Activated CD8-positive, alpha-beta memory T cell treated with anti-CD3 and anti-CD28 coated beads, Interleukin-2, amount 10 ng/mL, durations not matched to agents 7 days and 5 days (primary cell): ENCODE measurements at regions of chr1 and their contacts with region 1.

Region 1: GRCh38 chr1:44571712-44572571 is 102.3 kb downstream of the TMEM53 start:
- DNase-seq: peak; percentile 44
- ATAC-seq: peak; percentile 74
- H3K4me3 Mint-ChIP-seq: no peak overlapping the region
- H3K27ac Mint-ChIP-seq: no peak overlapping the region
- H3K4me1 Mint-ChIP-seq: no peaks in the 10 kb centered on the region
- H3K27me3 Mint-ChIP-seq: peaks cover 37% of the 10 kb centered on the region

Region 2: GRCh38 chr1:44557778-44558177 is 14.2 kb before region 1 on chr1:
- CTCF ChIA-PET with region 1: interaction called, 13 read pairs
- DNase-seq: no peak
- ATAC-seq: no peak
- H3K4me3 Mint-ChIP-seq: no peak overlapping the region
- H3K27ac Mint-ChIP-seq: no peak overlapping the region
- H3K4me1 Mint-ChIP-seq: peaks cover 17% of the 10 kb centered on the region
- H3K27me3 Mint-ChIP-seq: peaks cover 24% of the 10 kb centered on the region

Region 3: GRCh38 chr1:44609412-44609767 is 37.4 kb after region 1 on chr1:
- CTCF ChIA-PET with region 1: interaction called, 12 read pairs
- DNase-seq: peak; percentile 46
- ATAC-seq: no peak
- H3K4me3 Mint-ChIP-seq: no peak overlapping the region
- H3K27ac Mint-ChIP-seq: no peak overlapping the region
- H3K4me1 Mint-ChIP-seq: no peaks in the 10 kb centered on the region
- H3K27me3 Mint-ChIP-seq: peaks cover 6% of the 10 kb centered on the region